ENCODE measurements at regions of chr4 and their contacts with region 1.

Region 1: GRCh38 chr4:185142912-185143595 is at the start of gene SLC25A4:
- DNase-seq: peak; percentile 84 to 94 (median 90)
- ATAC-seq: peak; percentile 92 to 93
- H3K4me3 Mint-ChIP-seq: peak within 1 kb of the TSS; percentile 83 to 96 (median 92)
- H3K27ac Mint-ChIP-seq: peak within 1 kb of the TSS; percentile 65 to 94 (median 90)
- H3K4me1 Mint-ChIP-seq: peaks cover 14 to 22% (median 16%) of the 10 kb centered on the region in 4 donors
- H3K27me3 Mint-ChIP-seq: peaks cover 1 to 20% (median 6%) of the 10 kb centered on the region in 5 donors
- polyA plus RNA-seq, gene SLC25A4: 11.8 to 15.8 (median 13.7) TPM

Region 2: GRCh38 chr4:185086053-185086452 is 57.0 kb before region 1 on chr4:
- POLR2A ChIA-PET with region 1: no interaction called
- DNase-seq: no peak
- ATAC-seq: no peak
- H3K4me3 Mint-ChIP-seq: no peak overlapping the region
- H3K27ac Mint-ChIP-seq: no peak overlapping the region
- H3K4me1 Mint-ChIP-seq: peaks cover 0 to 2% (median under 1%) of the 10 kb centered on the region in 4 donors
- H3K27me3 Mint-ChIP-seq: peaks cover 11 to 24% (median 15%) of the 10 kb centered on the region in 5 donors

Region 3: DNA sequence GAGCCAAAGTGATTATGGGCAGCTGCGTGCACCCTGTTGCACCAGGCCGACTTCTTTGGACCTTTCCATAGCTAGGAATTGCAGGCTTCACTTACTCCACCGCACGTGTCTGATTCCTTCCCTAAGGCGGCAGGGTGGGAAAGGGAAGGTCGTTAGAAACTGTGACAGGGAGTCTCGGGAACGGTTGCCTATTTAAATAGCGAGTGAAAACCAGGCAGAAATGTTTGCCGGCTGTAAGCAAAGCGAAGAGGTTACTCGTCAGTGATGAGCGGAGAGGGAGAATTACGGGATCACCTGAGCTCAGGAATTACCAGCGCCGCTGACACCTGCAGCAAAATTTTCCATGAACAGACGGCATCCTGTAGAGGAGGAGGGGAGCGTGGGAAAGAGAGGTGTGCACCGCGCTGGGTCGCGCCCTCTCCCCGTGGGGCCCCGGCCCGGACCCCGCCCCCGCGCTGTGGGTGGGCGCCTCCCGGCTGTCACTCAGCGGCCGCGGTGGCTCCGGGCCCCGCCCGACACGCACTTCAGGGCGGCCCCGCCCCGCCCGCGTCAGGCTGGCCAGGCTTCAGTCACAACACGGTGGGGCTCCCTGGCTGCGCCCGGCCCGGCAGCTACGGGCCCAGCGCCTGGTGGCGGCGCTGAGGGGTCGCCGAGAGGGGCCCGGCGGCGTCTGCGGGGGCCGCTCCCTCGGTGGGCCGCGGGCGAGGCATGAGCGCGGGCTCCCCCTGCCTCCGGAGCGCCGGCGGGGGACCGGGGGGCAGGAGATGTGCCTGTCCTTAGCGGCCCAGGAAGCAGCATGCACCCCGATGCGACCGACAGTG is 66.2 kb after region 1 on chr4 and contains the start of gene SNX25:
- POLR2A ChIA-PET with region 1: interaction called, 12 read pairs
- DNase-seq: peak; percentile 80 to 91 (median 86)
- ATAC-seq: peak; percentile 88 to 90
- H3K4me3 Mint-ChIP-seq: peak within 1 kb of the TSS; percentile 77 to 95 (median 93)
- H3K27ac Mint-ChIP-seq: peak within 1 kb of the TSS; percentile 24 to 95 (median 89)
- H3K4me1 Mint-ChIP-seq: peaks cover 24 to 57% (median 46%) of the 10 kb centered on the region in 4 donors
- H3K27me3 Mint-ChIP-seq: peaks cover 0 to 2% (median 0%) of the 10 kb centered on the region in 5 donors
- polyA plus RNA-seq, gene SNX25: 4.2 to 7.6 (median 4.6) TPM

Region 4: DNA sequence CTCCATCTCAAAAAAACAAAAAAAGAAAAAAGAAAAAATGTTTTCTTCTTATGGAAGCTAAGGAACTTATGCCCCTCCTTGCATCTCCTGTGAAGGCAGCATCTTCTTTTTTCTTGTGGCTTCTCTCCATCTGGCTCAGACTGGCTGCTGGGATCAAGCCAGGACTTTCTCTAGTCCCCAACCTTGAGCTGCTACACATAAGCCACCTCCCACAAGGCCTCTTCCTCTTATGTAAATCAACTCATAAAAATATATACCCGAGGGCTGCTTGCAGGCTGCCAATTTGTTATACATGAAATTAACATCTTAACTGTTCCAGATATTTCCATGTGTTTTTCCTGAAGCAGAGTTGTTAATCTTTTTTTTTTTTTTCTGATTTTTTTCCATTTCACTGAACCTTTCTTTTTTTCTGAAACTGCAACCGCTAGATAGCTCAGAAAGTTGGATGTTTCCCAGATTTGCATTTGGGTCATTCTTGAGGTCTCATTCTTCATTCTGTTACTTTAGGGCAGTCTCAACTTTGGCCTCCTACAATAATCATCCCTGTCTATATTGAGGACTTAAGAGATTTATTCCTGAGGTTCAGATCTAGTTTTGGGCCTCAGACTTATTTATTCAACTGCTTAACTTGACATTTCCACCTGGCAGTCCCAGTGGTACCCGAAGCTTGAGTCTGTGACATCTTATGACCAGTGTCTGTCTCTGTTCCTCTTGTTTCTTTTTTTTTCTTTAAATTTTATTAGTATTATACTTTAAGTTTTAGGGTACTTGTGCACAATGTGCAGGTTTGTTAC is 76.7 kb after region 1 on chr4:
- POLR2A ChIA-PET with region 1: no interaction called
- DNase-seq: no peak
- ATAC-seq: peak in 1 of 2 donors; percentile 30
- H3K4me3 Mint-ChIP-seq: peak overlapping the region in 1 of 10 donors; percentile 12
- H3K27ac Mint-ChIP-seq: peak overlapping the region in 3 of 10 donors; percentile 38 to 58 (median 46)
- H3K4me1 Mint-ChIP-seq: peaks cover 17 to 40% (median 27%) of the 10 kb centered on the region in 4 donors
- H3K27me3 Mint-ChIP-seq: no peaks in the 10 kb centered on the region

Region 5: DNA sequence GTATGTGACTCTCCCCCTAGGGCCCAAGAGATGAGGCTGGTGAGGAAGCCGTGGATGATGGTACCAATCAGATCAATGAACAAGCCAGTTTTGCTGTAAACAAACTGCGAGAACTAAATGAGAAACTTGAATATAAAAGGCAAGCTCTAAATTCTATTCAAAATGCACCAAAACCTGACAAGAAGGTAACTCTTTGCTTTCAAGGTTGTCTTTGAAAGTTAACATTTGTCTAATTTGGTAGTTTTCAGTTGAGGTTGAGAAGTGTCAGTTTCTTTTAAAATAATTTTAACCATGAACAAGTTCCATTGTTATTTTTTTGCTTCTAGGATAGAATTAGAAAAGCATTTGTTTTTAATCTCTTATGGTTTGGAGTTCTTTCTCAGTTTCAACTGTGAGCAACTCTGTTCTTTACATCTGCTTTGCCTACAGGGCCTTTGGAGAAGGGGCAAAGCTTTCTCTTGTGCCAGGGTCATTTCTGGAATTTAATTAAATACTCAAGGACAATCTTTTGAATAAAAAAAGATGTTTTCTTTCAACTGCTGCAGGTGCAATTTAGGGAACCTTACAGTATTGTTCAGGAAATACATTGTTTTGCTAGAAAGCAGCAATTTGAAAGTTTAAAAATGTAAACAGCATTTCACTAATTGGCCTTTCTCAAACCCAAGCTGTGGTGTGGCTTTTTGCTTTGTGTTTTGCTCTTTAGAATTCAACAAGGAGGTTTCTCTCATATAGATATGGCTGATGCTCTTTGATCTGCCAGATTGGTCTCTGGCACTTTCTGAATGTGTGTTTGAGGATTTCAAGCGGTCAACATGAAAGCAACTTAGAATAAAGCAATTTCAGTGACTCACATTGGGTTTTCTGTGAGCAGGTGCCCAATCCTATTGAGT is 189.8 kb after region 1 on chr4:
- POLR2A ChIA-PET with region 1: no interaction called
- DNase-seq: no peak
- ATAC-seq: no peak
- H3K4me3 Mint-ChIP-seq: no peak overlapping the region
- H3K27ac Mint-ChIP-seq: no peak overlapping the region
- H3K4me1 Mint-ChIP-seq: peaks cover 0 to 6% (median 2%) of the 10 kb centered on the region in 4 donors
- H3K27me3 Mint-ChIP-seq: no peaks in the 10 kb centered on the region